RWPE1 (cell line): ENCODE measurements at regions of chr19 and their contacts with region 1.

Region 1: GRCh38 chr19:39475748-39476147 is 4.9 kb upstream of the TIMM50 start:
- DNase-seq: no peak
- H3K27ac ChIP-seq: peak overlapping the region; percentile 17
- CTCF ChIP-seq: no peak

Region 2: GRCh38 chr19:39435499-39436349 is 40.0 kb before region 1 on chr19 and contains the start of gene RPS16:
- CTCF ChIA-PET with region 1: interaction called, 6 read pairs
- POLR2A ChIA-PET with region 1: interaction called, 10 read pairs
- DNase-seq: peak; percentile 88
- H3K27ac ChIP-seq: peak within 1 kb of the TSS; percentile 90
- CTCF ChIP-seq: no peak